ENCODE measurements at regions of chr20 and their contacts with region 1.

Region 1: GRCh38 chr20:3011752-3012151 is 31.7 kb upstream of the GNRH2 start:
- DNase-seq: no peak
- ATAC-seq: no peak
- H3K4me3 ChIP-seq: no peak overlapping the region
- H3K4me3 Mint-ChIP-seq: no peak overlapping the region
- H3K27ac ChIP-seq: no peak overlapping the region
- H3K27ac Mint-ChIP-seq: peak overlapping the region; percentile 60
- H3K4me1 ChIP-seq: no peaks in the 10 kb centered on the region
- H3K4me1 Mint-ChIP-seq: no peaks in the 10 kb centered on the region
- H3K27me3 ChIP-seq: no peaks in the 10 kb centered on the region
- H3K27me3 Mint-ChIP-seq: no peaks in the 10 kb centered on the region
- CTCF ChIP-seq: no peak

Region 2: DNA sequence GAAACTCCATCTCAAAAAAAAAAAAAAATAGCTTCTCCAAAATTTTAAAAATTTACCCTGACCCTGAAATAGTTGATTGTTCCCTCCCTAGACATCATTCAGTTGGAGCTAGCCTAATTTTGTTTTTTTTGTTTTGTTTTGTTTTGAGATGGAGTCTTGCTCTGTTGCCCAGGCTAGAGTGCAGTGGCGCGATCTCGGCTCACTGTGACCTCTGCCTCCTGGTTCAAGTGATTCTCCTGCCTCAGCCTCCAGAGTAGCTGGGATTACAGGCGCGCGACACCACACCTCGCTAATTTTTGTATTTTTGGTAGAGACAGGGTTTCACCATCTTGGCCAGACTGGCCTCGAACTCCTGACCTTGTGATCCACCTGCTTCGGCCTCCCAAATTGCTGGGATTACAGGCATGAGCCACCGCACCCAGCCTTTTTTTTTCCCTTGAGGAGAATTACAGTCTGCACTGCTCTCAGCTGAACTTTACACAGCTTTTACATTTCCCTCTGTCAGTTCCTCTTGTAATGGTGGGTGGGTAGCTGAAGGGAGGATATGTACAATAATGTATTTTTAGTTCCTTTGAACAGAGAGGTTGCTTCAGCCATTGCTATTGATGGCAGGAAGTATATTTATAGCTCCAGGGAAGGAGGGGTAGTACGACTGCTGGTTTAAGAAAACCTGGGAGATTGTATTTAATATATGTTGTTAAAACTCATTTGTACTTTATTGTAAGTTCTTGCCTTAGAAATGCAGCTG is 110.7 kb before region 1 on chr20:
- CTCF ChIA-PET with region 1: no interaction called
- POLR2A ChIA-PET with region 1: no interaction called
- intact Hi-C with region 1: no loop called
- DNase-seq: peak in 1 of 9 experiments; percentile 18
- ATAC-seq: peak; percentile 44
- H3K4me3 ChIP-seq: no peak overlapping the region
- H3K4me3 Mint-ChIP-seq: peak overlapping the region; percentile 42
- H3K27ac ChIP-seq: peak overlapping the region in 1 of 2 experiments; percentile 37
- H3K27ac Mint-ChIP-seq: peak overlapping the region; percentile 9
- H3K4me1 ChIP-seq: peaks cover 24% of the 10 kb centered on the region
- H3K4me1 Mint-ChIP-seq: peaks cover 61% of the 10 kb centered on the region
- H3K27me3 ChIP-seq: no peaks in the 10 kb centered on the region
- H3K27me3 Mint-ChIP-seq: no peaks in the 10 kb centered on the region
- CTCF ChIP-seq: no peak

Region 3: DNA sequence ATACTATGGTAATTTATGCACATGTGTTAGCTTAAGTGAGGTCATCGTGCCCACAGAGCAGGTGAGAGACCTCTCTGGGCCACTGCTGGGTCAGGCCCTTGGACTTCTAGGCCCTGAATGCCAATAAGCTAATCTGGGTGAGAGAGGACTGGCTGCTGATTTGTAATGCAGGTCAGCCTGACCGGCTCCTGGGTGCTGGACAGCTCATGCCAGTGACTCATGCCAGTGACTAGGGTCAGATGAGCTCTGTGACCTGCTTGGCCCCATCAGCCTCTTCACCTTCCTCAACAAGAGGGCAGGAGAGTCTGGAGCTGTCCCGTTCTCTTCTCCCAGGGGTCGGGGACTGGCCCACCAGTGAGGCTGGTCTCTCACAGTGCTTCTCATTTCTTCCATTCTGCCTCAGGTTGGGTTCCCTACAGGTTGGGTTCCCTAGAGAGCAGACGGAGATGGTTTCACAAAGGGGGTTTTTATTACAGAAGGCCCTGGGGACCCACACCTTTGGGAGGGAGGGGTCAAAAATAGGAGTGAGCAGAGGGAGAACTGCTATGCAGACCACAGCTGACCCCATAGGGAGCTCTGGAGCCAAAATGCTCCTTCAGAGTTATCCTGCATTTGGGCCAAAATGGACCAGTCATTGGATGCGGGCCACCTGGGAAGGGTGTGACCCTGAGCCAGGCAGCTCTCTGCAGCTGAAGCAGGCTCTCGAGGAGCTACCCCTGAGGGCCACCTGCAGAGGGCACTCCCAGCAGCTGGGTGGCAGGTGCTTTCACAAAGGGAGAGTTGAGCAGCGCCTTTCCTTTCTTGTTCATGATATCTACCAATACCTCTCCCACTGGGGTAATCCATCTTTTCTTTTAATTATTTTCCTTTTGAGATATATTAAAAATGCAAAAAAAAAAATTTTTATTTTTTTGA is 57.5 kb after region 1 on chr20:
- CTCF ChIA-PET with region 1: no interaction called
- POLR2A ChIA-PET with region 1: no interaction called
- intact Hi-C with region 1: loop called in 1 of 2 experiments (anchors 2 kb)
- DNase-seq: peak in 6 of 9 experiments; percentile 45 to 73 (median 64)
- ATAC-seq: peak; percentile 59
- H3K4me3 ChIP-seq: no peak overlapping the region
- H3K4me3 Mint-ChIP-seq: no peak overlapping the region
- H3K27ac ChIP-seq: no peak overlapping the region
- H3K27ac Mint-ChIP-seq: no peak overlapping the region
- H3K4me1 ChIP-seq: peaks cover 13% of the 10 kb centered on the region
- H3K4me1 Mint-ChIP-seq: peaks cover 24% of the 10 kb centered on the region
- H3K27me3 ChIP-seq: no peaks in the 10 kb centered on the region
- H3K27me3 Mint-ChIP-seq: no peaks in the 10 kb centered on the region
- CTCF ChIP-seq: peak; percentile 41

Measured in CD8-positive, alpha-beta T cell (primary cell).